Natural killer cell (primary cell): ENCODE measurements at regions of chr21 and their contacts with region 1.

Region 1: DNA sequence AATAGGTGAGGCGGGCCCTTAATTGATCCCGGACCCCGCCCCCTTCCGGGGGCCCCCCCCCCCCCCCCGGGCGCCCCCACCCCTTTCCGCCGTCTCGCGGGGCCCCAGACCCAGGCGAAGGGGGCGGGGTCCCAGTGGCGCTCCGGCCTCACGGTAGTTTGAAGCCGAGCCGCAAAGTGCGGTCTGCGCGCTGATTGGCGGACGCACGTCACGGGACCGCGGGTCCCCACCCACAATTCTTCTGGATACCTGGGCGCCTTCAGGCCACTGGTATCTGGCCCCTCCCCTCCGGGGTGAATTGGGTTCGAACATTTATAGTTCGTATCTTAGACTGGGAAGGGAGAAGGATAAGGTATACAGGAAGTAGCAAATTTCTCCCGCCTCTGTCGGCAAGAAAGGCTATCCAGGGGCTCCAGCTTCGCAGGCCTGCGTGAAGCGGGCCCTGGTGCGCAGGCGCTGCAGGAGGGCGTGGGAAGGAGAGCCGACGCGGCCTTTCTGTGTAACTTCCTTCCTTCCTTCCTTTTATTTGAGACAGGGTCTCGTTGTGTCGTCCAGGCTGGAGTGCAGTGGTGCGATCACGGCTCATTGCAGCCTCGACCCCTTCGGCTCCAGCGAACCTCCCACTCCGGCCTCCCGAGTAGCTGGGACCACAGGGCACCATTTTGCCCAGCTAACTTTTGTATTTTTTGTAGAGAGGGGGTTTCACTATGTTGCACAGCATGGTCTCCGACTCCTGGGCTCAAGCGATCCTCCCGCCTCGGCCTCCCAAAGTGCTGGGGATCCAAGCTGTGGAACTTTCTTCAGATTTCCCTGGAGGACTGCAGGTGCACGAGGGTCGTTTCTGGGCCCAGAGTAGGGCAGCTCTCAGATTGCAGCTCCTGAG is 564 bp upstream of the HMGN1 start:
- DNase-seq: peak; percentile 98
- ATAC-seq: peak; percentile 78 to 91 (median 82)
- H3K4me3 ChIP-seq: peak overlapping the region; percentile 94
- H3K4me3 Mint-ChIP-seq: peak overlapping the region; percentile 94
- H3K27ac ChIP-seq: peak overlapping the region; percentile 93
- H3K27ac Mint-ChIP-seq: peak overlapping the region; percentile 89 to 90
- H3K4me1 ChIP-seq: peaks cover 6% of the 10 kb centered on the region
- H3K4me1 Mint-ChIP-seq: peaks cover 31 to 34% of the 10 kb centered on the region in 2 donors
- H3K27me3 ChIP-seq: no peaks in the 10 kb centered on the region
- H3K27me3 Mint-ChIP-seq: peaks cover 6% of the 10 kb centered on the region in 2 donors
- CTCF ChIP-seq: no peak

Region 2: GRCh38 chr21:39379986-39380891 is 30.8 kb after region 1 on chr21:
- intact Hi-C with region 1: loop called (anchors 1 kb)
- DNase-seq: peak; percentile 80 to 95
- ATAC-seq: peak; percentile 96 to 98 (median 98)
- H3K4me3 ChIP-seq: peak overlapping the region; percentile 92
- H3K4me3 Mint-ChIP-seq: peak overlapping the region; percentile 93
- H3K27ac ChIP-seq: peak overlapping the region; percentile 74
- H3K27ac Mint-ChIP-seq: peak overlapping the region; percentile 84 to 91
- H3K4me1 ChIP-seq: peaks cover 20% of the 10 kb centered on the region
- H3K4me1 Mint-ChIP-seq: peaks cover 12 to 13% of the 10 kb centered on the region in 2 donors
- H3K27me3 ChIP-seq: no peaks in the 10 kb centered on the region
- H3K27me3 Mint-ChIP-seq: peaks cover 2 to 8% of the 10 kb centered on the region in 2 donors
- CTCF ChIP-seq: no peak

Region 3: DNA sequence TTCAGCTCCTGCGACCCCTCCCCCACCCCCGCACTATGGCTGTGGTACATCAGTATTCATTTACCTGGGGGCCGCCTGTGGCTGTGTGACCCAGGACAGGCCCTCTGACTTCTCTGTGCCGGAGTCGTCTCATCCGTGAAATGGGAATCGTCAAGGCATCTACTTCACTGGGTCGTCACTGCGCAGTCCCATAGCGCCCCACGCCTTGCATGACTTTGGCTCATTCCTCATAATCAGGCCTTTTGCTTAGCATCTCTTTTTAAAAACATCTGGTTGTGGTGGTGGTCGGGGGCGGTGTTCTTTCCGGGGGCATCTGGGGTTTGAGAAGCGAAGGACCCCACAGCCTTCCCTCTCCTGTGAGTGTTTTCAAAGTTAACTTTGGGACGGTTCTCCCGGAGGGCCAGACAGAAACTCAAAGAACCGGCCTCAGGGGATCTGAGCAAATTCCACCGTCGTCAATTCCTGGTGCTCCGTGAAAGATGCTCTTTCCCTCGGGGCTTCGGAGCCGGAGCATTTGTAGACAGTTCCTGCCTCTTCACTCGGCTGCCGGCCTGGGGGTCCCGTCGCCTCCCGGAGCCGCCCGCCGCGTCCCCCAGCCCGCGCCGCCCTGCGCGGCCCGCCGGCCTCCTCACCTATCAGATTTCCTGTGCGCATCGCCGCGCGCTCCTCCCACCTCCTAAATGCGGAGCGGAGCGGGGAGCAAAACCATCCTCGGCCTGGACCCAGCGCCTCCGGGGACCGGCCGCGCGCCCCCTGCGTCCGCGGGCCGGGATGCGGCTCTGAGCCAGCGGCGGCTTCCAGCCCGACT is 263.0 kb after region 1 on chr21 and contains the start of gene B3GALT5:
- intact Hi-C with region 1: no loop called
- DNase-seq: no peak
- ATAC-seq: no peak
- H3K4me3 ChIP-seq: no peak within 1 kb of the TSS
- H3K4me3 Mint-ChIP-seq: no peak within 1 kb of the TSS
- H3K27ac ChIP-seq: no peak within 1 kb of the TSS
- H3K27ac Mint-ChIP-seq: no peak within 1 kb of the TSS
- H3K4me1 ChIP-seq: no peaks in the 10 kb centered on the region
- H3K4me1 Mint-ChIP-seq: no peaks in the 10 kb centered on the region
- H3K27me3 ChIP-seq: peaks cover 6% of the 10 kb centered on the region
- H3K27me3 Mint-ChIP-seq: peaks cover 24 to 32% of the 10 kb centered on the region in 2 donors
- CTCF ChIP-seq: no peak
- total RNA-seq, gene B3GALT5: 0.05 TPM in 1 of 3 donors, not detected in the others